Activated naive CD4-positive, alpha-beta T cell treated with anti-CD3 and anti-CD28 coated beads for 36 hours (primary cell): ENCODE measurements at regions of chr12 and their contacts with region 1.

Region 1: GRCh38 chr12:6766651-6767349 is 637 bp downstream of the PTMS start:
- DNase-seq: peak; percentile 57
- H3K4me3 Mint-ChIP-seq: peak overlapping the region; percentile 85
- H3K27ac Mint-ChIP-seq: peak overlapping the region; percentile 52
- H3K4me1 Mint-ChIP-seq: peaks cover 38% of the 10 kb centered on the region
- H3K27me3 Mint-ChIP-seq: peaks cover 34% of the 10 kb centered on the region

Region 2: GRCh38 chr12:6526766-6527525 is 239.9 kb before region 1 on chr12:
- CTCF ChIA-PET with region 1: no interaction called
- intact Hi-C with region 1: no loop called
- DNase-seq: no peak
- H3K4me3 Mint-ChIP-seq: no peak overlapping the region
- H3K27ac Mint-ChIP-seq: no peak overlapping the region
- H3K4me1 Mint-ChIP-seq: peaks cover 5% of the 10 kb centered on the region
- H3K27me3 Mint-ChIP-seq: no peaks in the 10 kb centered on the region

Region 3: DNA sequence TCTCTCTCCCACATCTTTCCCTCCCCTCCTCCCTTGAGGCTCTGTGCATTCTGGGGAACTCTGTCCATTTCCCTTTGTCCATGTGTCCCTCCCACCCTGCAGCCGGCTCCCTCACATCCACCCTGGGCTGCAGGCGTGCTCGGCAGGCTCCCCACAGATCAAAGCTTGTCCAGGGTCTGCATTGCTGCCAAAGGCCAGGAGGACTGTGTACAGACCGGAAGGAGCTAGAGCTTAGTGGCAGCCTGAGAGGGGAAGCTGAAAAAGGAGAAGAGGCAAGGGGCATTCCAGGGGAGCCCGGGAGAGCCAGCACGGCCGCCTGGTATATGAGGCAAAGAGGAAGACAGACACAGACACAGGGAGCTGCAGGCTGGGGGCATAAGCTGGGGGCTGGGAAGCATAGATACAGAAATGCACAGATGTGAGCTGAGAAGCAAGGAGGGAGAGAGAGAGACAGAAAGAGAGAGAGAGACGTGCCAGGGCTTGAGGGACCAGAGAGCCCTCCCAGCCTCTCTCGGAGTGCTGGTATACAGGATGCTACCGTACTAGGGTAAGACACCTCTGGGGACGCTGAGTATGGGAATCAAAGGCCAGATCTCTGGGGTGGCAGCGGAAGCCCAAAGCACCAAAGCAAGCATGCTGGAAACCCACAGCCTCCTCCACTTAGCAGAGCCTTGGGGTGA is 25.9 kb after region 1 on chr12:
- CTCF ChIA-PET with region 1: interaction called, 39 read pairs
- intact Hi-C with region 1: loop called (anchors 1 kb)
- DNase-seq: peak; percentile 61
- H3K4me3 Mint-ChIP-seq: peak overlapping the region; percentile 97
- H3K27ac Mint-ChIP-seq: peak overlapping the region; percentile 96
- H3K4me1 Mint-ChIP-seq: peaks cover 51% of the 10 kb centered on the region
- H3K27me3 Mint-ChIP-seq: no peaks in the 10 kb centered on the region

Region 4: DNA sequence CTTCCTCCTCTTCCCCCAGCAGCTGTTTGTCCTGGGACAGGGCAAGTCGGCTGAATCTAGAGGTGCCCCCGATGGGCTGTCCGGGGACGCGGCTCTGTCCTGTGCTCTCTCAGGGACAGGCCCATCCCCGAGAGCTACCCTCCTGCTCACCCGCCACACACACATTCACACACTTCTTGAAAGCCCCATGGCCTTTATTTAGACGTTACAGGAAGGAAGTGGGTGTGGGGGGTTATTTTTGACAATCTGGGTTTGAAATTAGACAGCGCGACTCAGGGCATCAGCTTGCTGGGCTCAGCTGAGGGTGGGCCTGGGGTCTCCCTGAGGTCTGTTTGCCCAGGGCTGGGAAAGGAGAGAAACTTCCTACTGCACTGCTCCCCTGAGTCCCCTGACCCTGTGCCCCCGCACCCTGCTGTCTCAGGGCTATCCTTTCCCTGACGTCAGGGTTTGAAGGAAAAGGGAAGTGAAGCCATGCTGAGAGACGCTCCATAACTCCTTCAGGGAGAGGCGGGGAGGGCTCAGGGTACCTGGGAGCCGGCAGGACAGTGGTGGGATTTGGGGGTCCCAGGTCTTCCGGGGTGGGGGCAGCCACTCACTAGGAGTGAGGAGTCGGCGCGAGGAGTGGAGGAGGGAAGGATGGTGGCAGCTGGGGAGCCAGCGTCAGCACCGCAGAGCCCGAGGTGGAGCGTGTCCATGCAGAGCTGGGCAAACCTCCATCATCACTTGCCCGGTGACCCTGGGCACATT is 192.4 kb after region 1 on chr12:
- CTCF ChIA-PET with region 1: no interaction called
- intact Hi-C with region 1: loop called (anchors 5 kb)
- DNase-seq: peak; percentile 89
- H3K4me3 Mint-ChIP-seq: peak overlapping the region; percentile 81
- H3K27ac Mint-ChIP-seq: peak overlapping the region; percentile 93
- H3K4me1 Mint-ChIP-seq: peaks cover 89% of the 10 kb centered on the region
- H3K27me3 Mint-ChIP-seq: no peaks in the 10 kb centered on the region

Region 5: GRCh38 chr12:7017858-7018349 is 251.1 kb after region 1 on chr12:
- CTCF ChIA-PET with region 1: no interaction called
- intact Hi-C with region 1: no loop called
- DNase-seq: peak; percentile 46
- H3K4me3 Mint-ChIP-seq: peak overlapping the region; percentile 94
- H3K27ac Mint-ChIP-seq: peak overlapping the region; percentile 92
- H3K4me1 Mint-ChIP-seq: peaks cover 38% of the 10 kb centered on the region
- H3K27me3 Mint-ChIP-seq: no peaks in the 10 kb centered on the region